ENCODE measurements at regions of chr21 and their contacts with region 1.

Region 1: DNA sequence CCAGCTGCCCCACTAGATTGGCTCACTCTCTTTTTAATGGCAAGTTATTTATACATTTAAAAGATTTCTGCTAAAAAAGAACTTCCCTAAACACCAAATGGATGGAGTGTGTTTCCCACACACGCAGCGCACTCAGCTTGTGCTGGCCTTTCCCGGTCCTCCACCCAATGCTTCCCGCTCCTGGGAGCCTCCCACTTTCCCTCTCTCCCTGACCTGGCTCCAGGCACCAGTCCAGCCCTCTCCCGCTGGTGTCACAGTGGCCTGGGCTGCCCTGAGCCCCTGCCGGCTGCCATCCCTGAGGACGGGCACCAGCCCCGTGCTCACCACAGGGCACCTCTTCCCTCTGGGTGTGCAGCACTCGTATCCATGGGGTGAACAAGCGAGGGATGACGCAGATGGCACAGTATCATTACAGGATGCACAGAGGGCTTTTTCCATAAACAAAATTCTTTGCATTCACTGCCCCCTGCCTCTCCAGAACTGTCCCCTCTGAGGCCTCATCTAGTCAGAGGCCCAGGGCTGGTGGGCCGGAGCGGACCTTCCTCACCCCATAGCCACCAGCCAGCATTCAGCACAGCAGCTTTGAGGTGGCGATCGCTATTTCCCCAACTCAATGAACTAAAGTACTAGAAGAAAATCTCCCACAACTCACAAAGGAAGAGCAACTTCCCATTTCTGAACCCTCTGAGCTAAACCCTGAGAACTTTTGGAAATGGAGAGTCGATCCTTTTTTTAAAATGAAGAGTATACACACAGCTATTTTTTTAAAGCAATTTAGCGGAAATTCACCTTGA is 68.5 kb downstream of the SLC37A1 start:
- DNase-seq: no peak
- ATAC-seq: no peak
- H3K4me3 ChIP-seq: no peak overlapping the region
- H3K27ac ChIP-seq: no peak overlapping the region
- H3K4me1 ChIP-seq: no peaks in the 10 kb centered on the region
- CTCF ChIP-seq: no peak
- EP300 ChIP-seq: no peak
- POLR2A ChIP-seq: no peak
- RAD21 ChIP-seq: no peak

Region 2: DNA sequence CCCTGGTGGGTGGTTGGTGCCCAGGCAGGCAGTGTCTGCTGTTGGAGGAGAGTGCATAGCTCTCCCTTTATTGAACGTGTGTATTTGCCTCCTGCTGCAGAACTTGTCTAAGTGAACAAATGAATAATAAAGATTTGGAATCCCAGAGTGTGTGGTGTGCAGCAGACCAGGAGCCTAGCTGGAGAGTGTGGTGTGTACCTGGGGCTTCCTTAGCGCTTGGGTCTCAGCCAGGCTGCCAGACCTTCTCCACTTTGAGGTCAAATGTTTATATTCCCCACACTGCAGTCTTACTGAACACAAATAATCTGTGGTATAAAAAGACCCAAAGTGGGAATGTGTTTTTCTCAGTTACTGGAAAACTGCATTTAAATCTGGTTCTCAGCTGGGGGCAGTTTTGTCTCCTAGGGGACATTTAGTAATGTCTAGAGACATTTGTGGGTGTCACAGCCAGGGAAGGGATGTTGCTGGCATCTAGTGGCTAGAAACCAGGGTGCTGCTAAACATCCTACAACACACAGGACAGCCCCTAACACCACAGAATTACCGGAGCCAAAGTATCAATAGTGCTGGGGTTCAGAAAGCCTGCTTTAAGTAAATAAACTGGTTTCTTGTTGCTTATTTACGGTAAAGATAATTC is 45.0 kb before region 1 on chr21:
- CTCF ChIA-PET with region 1: no interaction called
- POLR2A ChIA-PET with region 1: no interaction called
- DNase-seq: peak in 1 of 2 experiments; percentile 6
- ATAC-seq: 0 out of 6 replicates have a peak, but pooled peaks of 1 of the 2 experiments have one; percentile 54
- H3K4me3 ChIP-seq: no peak overlapping the region
- H3K27ac ChIP-seq: no peak overlapping the region
- H3K4me1 ChIP-seq: no peaks in the 10 kb centered on the region
- CTCF ChIP-seq: peak; percentile 29; the same call in 2 of the 3 replicates
- EP300 ChIP-seq: no peak
- POLR2A ChIP-seq: no peak
- RAD21 ChIP-seq: peak; percentile 35 to 45; a peak in 4 of 5 replicates

Region 3: DNA sequence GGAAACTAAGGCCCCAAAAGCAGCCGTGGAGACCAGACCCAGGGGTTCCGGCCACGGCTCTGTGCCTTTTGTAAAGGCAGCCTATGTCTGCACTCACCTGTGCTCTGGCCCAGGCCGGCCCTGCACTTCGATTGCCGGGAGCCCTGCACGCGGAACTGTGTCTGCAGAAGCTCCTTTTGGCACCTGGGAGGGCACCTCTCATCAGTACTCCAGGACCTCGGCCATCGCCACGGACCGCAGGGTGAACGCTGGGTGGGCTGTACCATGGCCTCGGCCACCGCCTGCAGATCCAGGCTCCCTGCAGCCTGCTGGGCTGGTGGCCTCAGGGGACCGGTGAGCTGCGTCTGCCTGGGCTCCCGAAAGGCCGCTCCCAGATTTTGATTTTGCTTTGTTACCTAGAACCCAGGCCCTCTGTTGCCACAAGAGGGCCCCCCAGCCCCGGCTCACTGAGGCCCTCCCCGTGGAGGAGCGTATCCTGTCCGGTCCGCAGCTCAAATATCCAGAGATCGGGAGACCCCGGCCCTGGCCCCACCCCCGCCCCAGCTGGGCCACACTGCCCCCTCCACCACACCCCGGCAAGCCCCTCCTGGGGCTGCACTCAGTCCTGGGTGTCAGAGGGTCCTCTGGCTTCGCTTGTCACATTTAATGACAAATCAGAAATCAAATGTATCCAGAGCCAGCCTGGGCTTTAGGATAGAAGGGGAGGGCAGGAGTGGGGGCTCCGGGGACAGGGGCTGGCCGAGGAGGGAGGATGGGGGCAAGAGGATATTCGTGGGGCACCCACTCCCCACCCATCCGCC is 11.0 kb after region 1 on chr21:
- CTCF ChIA-PET with region 1: interaction called, 17 read pairs
- POLR2A ChIA-PET with region 1: no interaction called
- DNase-seq: peak; percentile 42 to 80
- ATAC-seq: peak; percentile 96 to 99
- H3K4me3 ChIP-seq: no peak overlapping the region
- H3K27ac ChIP-seq: peak overlapping the region in 1 of 2 experiments; percentile 64; a peak in 3 of 6 replicates
- H3K4me1 ChIP-seq: no peaks in the 10 kb centered on the region
- CTCF ChIP-seq: peak; percentile 69
- EP300 ChIP-seq: no peak
- POLR2A ChIP-seq: no peak
- RAD21 ChIP-seq: peak; percentile 83 to 84